Activated CD4-positive, alpha-beta memory T cell treated with anti-CD3 and anti-CD28 coated beads for 36 hours (primary cell): ENCODE measurements at regions of chr5 and their contacts with region 1.

Region 1: GRCh38 chr5:134041570-134042411 is 37.0 kb upstream of the VDAC1 start:
- DNase-seq: no peak
- H3K4me3 Mint-ChIP-seq: no peak overlapping the region
- H3K27ac Mint-ChIP-seq: no peak overlapping the region
- H3K4me1 Mint-ChIP-seq: peaks cover 39% of the 10 kb centered on the region
- H3K27me3 Mint-ChIP-seq: no peaks in the 10 kb centered on the region

Region 2: GRCh38 chr5:134053840-134054338 is 12.1 kb after region 1 on chr5:
- CTCF ChIA-PET with region 1: interaction called, 101 read pairs
- POLR2A ChIA-PET with region 1: interaction called, 3 read pairs
- intact Hi-C with region 1: no loop called
- DNase-seq: no peak
- H3K4me3 Mint-ChIP-seq: no peak overlapping the region
- H3K27ac Mint-ChIP-seq: peak overlapping the region; percentile 74
- H3K4me1 Mint-ChIP-seq: peaks cover 29% of the 10 kb centered on the region
- H3K27me3 Mint-ChIP-seq: no peaks in the 10 kb centered on the region

Region 3: DNA sequence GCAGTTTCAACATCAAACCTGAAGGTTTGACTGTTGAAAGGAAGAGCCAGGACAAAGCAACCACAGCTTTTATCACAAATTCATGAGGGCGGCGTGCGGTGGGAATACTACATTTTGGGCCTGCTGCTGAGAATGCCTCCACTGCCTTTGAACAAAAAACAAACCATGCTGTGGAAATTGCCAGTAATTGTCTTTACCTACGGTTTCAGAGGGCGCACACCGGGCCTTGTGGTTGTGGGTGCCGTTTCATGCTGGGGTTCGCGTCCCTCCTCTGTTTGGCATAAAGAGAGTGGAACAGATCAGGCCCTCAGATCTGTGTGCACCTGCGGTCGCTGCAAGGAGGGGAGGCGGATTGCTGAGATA is 45.1 kb after region 1 on chr5:
- CTCF ChIA-PET with region 1: interaction called, 25 read pairs
- POLR2A ChIA-PET with region 1: interaction called, 3 read pairs
- intact Hi-C with region 1: no loop called
- DNase-seq: peak; percentile 88
- H3K4me3 Mint-ChIP-seq: peak overlapping the region; percentile 10
- H3K27ac Mint-ChIP-seq: peak overlapping the region; percentile 80
- H3K4me1 Mint-ChIP-seq: peaks cover 75% of the 10 kb centered on the region
- H3K27me3 Mint-ChIP-seq: peaks cover 2% of the 10 kb centered on the region

Region 4: GRCh38 chr5:134119720-134120119 is 77.9 kb after region 1 on chr5:
- CTCF ChIA-PET with region 1: interaction called, 34 read pairs
- POLR2A ChIA-PET with region 1: no interaction called
- intact Hi-C with region 1: no loop called
- DNase-seq: peak; percentile 54
- H3K4me3 Mint-ChIP-seq: peak overlapping the region; percentile 70
- H3K27ac Mint-ChIP-seq: peak overlapping the region; percentile 84
- H3K4me1 Mint-ChIP-seq: peaks cover 84% of the 10 kb centered on the region
- H3K27me3 Mint-ChIP-seq: no peaks in the 10 kb centered on the region

Region 5: GRCh38 chr5:134145779-134146581 is 104.2 kb after region 1 on chr5:
- CTCF ChIA-PET with region 1: interaction called, 981 read pairs
- POLR2A ChIA-PET with region 1: interaction called, 5 read pairs
- intact Hi-C with region 1: loop called (anchors 1 kb)
- DNase-seq: peak; percentile 89
- H3K4me3 Mint-ChIP-seq: no peak overlapping the region
- H3K27ac Mint-ChIP-seq: peak overlapping the region; percentile 57
- H3K4me1 Mint-ChIP-seq: peaks cover 24% of the 10 kb centered on the region
- H3K27me3 Mint-ChIP-seq: no peaks in the 10 kb centered on the region

Region 6: GRCh38 chr5:134176511-134177368 is 134.9 kb after region 1 on chr5 and contains the start of gene SKP1:
- CTCF ChIA-PET with region 1: interaction called, 27 read pairs
- POLR2A ChIA-PET with region 1: interaction called, 3 read pairs
- intact Hi-C with region 1: loop called (anchors 1 kb)
- DNase-seq: peak; percentile 88
- H3K4me3 Mint-ChIP-seq: peak within 1 kb of the TSS; percentile 95
- H3K27ac Mint-ChIP-seq: peak within 1 kb of the TSS; percentile 96
- H3K4me1 Mint-ChIP-seq: peaks cover 33% of the 10 kb centered on the region
- H3K27me3 Mint-ChIP-seq: no peaks in the 10 kb centered on the region
- total RNA-seq, gene SKP1: 284 to 286 TPM